Sigmoid colon (tissue), 7 donors: ENCODE measurements at regions of chr2 and their contacts with region 1.

Region 1: GRCh38 chr2:95314964-95315611 is 17.9 kb downstream of the KCNIP3 start:
- DNase-seq: no peak
- H3K4me3 ChIP-seq: no peak overlapping the region
- H3K27ac ChIP-seq: no peak overlapping the region
- H3K4me1 ChIP-seq: no peaks in the 10 kb centered on the region
- H3K27me3 ChIP-seq: no peaks in the 10 kb centered on the region
- CTCF ChIP-seq: peak in 1 of 4 experiments; percentile 36
- EP300 ChIP-seq: no peak
- POLR2A ChIP-seq: no peak

Region 2: GRCh38 chr2:95215018-95215612 is 100.0 kb before region 1 on chr2:
- intact Hi-C with region 1: loop called (anchors 10 kb)
- DNase-seq: no peak
- H3K4me3 ChIP-seq: no peak overlapping the region
- H3K27ac ChIP-seq: no peak overlapping the region
- H3K4me1 ChIP-seq: no peaks in the 10 kb centered on the region
- H3K27me3 ChIP-seq: no peaks in the 10 kb centered on the region
- CTCF ChIP-seq: no peak
- EP300 ChIP-seq: no peak
- POLR2A ChIP-seq: no peak